ENCODE measurements at regions of chr17 and their contacts with region 1.

Region 1: DNA sequence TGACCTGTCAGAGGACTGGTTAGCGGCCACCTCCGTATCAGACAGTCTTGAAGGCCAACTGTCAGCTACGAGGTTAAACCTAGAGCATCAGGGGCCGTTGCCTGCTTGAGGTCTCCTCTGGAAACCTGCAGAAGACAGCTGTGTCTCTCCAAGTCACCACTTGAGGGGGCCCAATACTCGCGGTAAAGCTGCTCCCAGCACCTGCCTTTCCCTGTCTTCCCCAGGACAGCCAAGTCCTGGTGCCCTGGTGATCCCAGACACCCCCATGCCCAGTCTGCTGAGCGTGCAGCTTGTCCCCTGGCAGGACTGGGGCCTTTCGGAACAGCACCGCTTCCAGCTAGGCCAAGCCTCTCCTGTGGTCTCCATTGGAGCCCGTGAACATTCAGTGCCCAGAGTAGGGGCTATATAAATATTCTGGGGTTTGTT is 80.1 kb downstream of the DNAH17 start:
- DNase-seq: peak; percentile 68 to 86
- ATAC-seq: peak; percentile 90 to 99 (median 94)
- H3K4me3 ChIP-seq: no peak overlapping the region
- H3K27ac ChIP-seq: no peak overlapping the region
- H3K4me1 ChIP-seq: no peaks in the 10 kb centered on the region
- H3K27me3 ChIP-seq: peaks cover 0 to 8% (median 0%) of the 10 kb centered on the region in 3 donors
- CTCF ChIP-seq: peak; percentile 74

Region 2: DNA sequence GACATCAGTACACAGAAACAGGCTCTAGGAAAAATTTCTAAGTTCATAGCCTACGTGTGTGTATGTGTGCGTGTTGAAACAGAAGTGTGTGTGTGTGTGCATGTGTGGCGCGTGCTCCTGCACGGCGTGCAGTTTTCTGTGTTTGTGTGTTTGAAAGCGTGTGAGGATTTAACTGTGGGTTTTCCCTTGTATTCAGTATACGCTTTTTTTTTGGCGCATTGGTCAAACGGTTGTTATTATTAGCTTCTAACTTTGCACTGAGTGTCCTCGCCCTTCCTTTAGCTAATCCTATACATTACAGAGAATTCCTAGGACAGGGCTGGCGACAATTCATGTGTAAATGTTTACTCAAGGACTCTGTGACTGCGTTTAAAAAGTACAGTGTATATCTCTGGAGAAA is 391.6 kb before region 1 on chr17:
- intact Hi-C with region 1: no loop called
- DNase-seq: no peak
- ATAC-seq: no peak
- H3K4me3 ChIP-seq: no peak overlapping the region
- H3K27ac ChIP-seq: no peak overlapping the region
- H3K4me1 ChIP-seq: peaks cover 12% of the 10 kb centered on the region
- H3K27me3 ChIP-seq: no peaks in the 10 kb centered on the region
- CTCF ChIP-seq: no peak

Region 3: DNA sequence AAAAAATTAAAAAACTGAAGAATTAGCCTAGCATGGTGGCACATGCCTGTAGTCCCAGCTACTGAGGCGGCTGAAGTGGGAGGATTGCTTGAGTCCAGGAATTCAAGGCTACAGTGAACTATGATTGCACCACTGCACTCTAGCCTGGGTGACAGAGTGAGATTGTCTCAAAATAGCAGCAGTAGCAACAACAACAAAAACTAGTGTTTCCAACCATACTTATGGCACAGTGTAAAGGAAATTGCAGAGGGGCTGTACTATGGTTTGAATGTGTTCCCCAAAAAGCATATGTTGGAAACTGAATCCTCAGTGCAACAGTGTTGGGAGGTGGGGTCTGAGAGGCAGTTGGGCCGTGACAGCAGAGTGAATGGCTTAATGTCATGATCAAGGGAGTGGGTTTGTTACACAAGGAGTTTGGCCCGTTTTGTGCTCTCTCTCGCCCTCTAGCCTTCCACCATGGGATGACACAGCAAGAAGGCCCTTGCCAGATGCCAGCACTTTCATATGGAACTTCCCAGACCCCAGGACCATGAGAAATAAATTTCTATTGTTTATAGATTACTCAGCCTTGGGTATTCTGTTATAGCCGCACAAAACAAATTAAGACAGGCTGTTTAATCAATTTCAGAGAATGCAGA is 48.7 kb before region 1 on chr17:
- intact Hi-C with region 1: no loop called
- DNase-seq: no peak
- ATAC-seq: no peak
- H3K4me3 ChIP-seq: no peak overlapping the region
- H3K27ac ChIP-seq: no peak overlapping the region
- H3K4me1 ChIP-seq: peaks cover 8% of the 10 kb centered on the region
- H3K27me3 ChIP-seq: no peaks in the 10 kb centered on the region
- CTCF ChIP-seq: no peak

Region 4: DNA sequence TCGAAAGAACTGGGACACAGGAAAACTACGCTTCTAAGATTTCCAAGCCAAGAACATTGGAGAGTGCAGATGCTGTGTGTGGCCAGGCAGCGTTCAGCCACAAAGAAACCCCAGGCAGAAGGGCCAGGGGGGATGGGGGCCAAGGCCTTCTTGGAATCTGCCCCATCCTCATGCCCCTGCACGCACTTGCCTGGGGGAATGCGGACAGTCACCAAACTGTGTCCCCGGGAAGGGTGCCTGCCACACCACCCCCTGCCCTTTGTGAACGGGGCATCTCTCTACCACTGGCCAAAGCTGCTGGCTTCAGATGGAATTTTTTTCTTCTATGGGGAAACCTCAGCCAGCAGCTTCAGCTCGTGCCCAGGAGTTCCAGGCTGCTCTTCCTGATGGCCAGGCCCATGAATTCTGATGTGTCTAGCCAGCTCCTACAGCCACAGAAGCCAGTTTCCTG is 112.1 kb after region 1 on chr17:
- intact Hi-C with region 1: loop called in 1 of 2 experiments (anchors 5 kb)
- DNase-seq: peak in 1 of 2 donors; percentile 41
- ATAC-seq: peak in 3 of 4 donors; percentile 27 to 35 (median 32)
- H3K4me3 ChIP-seq: no peak overlapping the region
- H3K27ac ChIP-seq: no peak overlapping the region
- H3K4me1 ChIP-seq: no peaks in the 10 kb centered on the region
- H3K27me3 ChIP-seq: peaks cover 0 to 10% (median 1%) of the 10 kb centered on the region in 3 donors
- CTCF ChIP-seq: no peak

Region 5: GRCh38 chr17:78624324-78625151 is 127.4 kb after region 1 on chr17:
- intact Hi-C with region 1: no loop called
- DNase-seq: no peak
- ATAC-seq: no peak
- H3K4me3 ChIP-seq: no peak overlapping the region
- H3K27ac ChIP-seq: no peak overlapping the region
- H3K4me1 ChIP-seq: no peaks in the 10 kb centered on the region
- H3K27me3 ChIP-seq: no peaks in the 10 kb centered on the region
- CTCF ChIP-seq: no peak

Region 6: GRCh38 chr17:78645421-78646295 is 148.5 kb after region 1 on chr17:
- intact Hi-C with region 1: no loop called
- DNase-seq: peak; percentile 72 to 81
- ATAC-seq: peak; percentile 32 to 60 (median 56)
- H3K4me3 ChIP-seq: no peak overlapping the region
- H3K27ac ChIP-seq: peak overlapping the region; percentile 47
- H3K4me1 ChIP-seq: no peaks in the 10 kb centered on the region
- H3K27me3 ChIP-seq: peaks cover 0 to 4% (median 0%) of the 10 kb centered on the region in 3 donors
- CTCF ChIP-seq: no peak

Region 7: GRCh38 chr17:78708510-78708973 is 211.4 kb after region 1 on chr17:
- intact Hi-C with region 1: loop called (anchors 1 to 2 kb)
- DNase-seq: peak; percentile 60 to 83
- ATAC-seq: peak; percentile 88 to 95 (median 90)
- H3K4me3 ChIP-seq: no peak overlapping the region
- H3K27ac ChIP-seq: no peak overlapping the region
- H3K4me1 ChIP-seq: peaks cover 22% of the 10 kb centered on the region
- H3K27me3 ChIP-seq: no peaks in the 10 kb centered on the region
- CTCF ChIP-seq: peak; percentile 83

Region 8: DNA sequence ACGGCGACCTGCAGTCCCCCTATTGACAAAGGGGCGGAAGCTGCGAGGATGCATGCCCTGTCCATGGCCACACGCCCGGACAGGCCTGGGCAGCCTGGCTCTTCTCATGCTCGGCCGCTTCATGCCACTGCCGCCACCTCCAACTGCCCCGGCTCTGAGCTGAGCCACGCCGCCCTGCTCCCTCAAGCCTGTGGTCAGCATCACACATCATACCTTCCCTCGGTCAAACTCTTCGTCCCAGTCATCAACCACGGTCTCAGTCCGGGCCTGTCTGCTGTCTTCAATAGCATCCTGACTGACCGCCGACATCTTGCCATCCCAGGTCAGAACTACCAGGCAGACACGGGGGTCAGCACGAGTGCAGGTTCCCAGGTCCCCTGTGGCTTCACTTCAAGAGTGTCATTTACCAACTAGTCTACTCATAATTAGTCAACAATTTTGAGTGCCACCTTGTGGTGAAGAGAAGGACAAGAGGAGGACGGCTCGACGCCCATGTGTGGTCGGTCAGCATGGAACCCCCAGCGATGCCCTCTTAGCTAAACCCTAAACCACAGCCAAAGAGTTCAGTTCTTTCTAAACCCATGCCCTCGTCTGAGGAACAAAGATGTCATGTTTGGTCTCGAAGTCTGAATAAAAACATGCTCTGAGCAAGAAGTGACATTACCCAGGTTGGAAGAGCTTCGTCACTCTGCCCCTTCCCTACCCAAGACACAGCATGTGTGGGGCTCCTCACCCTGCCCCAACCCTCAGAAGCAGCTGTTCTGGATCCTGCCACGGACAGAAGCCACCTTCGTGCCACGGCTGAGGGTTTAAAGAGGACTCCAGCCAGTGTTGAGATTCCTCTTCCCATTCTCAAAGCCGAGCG is 301.8 kb after region 1 on chr17:
- intact Hi-C with region 1: loop called (anchors 5 kb)
- DNase-seq: no peak
- ATAC-seq: peak; percentile 50 to 76 (median 54)
- H3K4me3 ChIP-seq: no peak overlapping the region
- H3K27ac ChIP-seq: peak overlapping the region; percentile 54
- H3K4me1 ChIP-seq: peaks cover 47% of the 10 kb centered on the region
- H3K27me3 ChIP-seq: no peaks in the 10 kb centered on the region
- CTCF ChIP-seq: peak; percentile 57

Region 9: GRCh38 chr17:78970834-78971773 is 474.0 kb after region 1 on chr17:
- intact Hi-C with region 1: loop called in 1 of 2 experiments (anchors 10 kb)
- DNase-seq: peak; percentile 79 to 89
- ATAC-seq: peak; percentile 56 to 69 (median 62)
- H3K4me3 ChIP-seq: no peak overlapping the region
- H3K27ac ChIP-seq: no peak overlapping the region
- H3K4me1 ChIP-seq: peaks cover 15% of the 10 kb centered on the region
- H3K27me3 ChIP-seq: no peaks in the 10 kb centered on the region
- CTCF ChIP-seq: peak; percentile 86

Measured in psoas muscle (tissue), 8 donors.